Gastrocnemius medialis (tissue), 4 donors: ENCODE measurements at regions of chr19 and their contacts with region 1.

Region 1: DNA sequence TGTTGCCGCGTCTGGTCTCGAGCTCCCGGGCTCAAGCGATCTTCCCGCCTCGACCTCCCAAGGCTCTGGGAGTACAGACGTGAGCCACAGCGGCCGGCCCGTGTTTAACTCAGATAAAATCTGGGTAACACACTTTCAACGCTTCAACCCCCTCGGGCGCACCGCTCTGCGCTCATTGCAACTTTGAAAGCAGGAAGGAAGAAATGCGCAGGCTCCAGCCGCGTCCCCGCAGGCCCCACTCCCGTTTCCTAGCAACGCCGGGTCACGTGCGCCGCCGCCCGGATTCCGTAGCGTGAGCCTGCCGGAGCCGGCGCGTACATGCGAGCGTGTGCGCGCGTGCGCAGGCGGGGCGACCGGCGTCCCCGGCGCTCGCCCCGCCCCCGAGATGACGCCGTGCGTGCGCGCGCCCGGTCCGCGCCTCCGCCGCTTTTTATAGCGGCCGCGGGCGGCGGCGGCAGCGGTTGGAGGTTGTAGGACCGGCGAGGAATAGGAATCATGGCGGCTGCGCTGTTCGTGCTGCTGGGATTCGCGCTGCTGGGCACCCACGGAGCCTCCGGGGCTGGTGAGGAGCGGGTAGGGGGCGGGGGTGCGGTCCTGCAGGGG is at the start of gene BSG:
- DNase-seq: peak; percentile 97
- ATAC-seq: peak; percentile 49 to 58
- H3K4me3 ChIP-seq: peak within 1 kb of the TSS; percentile 85 to 100 (median 96)
- H3K27ac ChIP-seq: peak within 1 kb of the TSS; percentile 97 to 100 (median 99)
- H3K4me1 ChIP-seq: peaks cover 39 to 50% of the 10 kb centered on the region in 2 donors
- H3K27me3 ChIP-seq: peaks cover 4 to 8% (median 5%) of the 10 kb centered on the region in 3 donors
- CTCF ChIP-seq: peak in 1 of 5 experiments; percentile 26
- POLR2A ChIP-seq: peak; percentile 99
- total RNA-seq, gene BSG: 305 to 380 (median 364) TPM

Region 2: DNA sequence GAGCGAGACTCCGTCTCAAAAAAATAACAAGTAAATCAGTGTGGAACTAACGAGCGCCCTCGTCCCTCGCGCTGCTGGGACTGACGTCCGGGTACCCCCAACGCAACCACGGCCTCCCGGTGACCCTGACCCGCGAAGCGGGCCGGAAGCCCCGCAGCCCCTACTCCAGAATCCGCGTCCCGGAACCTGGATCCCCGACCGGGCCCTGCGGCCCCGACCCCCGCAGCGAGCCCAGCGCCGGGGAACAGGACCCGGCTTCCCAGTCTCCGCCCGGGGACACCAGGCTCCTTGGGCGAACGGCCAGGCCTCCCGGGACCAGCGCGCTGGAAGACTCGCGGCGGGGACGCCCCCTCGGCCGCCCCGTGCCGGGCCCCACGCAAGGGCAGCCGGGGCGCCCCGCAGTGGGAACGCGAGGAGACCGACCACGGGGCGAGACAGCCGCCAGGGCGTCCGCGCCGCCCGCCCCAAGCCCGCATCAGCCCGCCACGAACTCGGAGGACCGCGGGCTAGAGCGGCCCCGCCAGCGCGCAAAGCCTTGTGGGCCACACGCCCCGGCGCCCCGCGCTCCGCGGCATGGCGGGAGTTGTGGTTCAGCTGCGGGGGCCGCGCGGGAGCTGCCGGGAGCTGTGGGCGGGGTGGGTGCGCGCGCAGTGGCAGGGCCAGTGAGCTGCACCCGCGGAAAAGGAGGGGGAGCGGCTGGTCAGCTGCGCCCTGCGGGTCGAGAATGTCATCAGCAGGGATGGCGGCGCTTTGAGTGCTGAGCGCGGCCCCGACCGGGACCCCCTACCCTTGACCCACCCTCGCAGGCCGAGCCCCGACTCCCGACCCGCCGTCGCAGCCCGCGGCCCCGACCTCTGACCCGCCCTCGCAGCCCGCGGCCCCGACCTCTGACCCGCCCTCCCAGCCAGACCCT is 83.5 kb before region 1 on chr19:
- in situ Hi-C with region 1: no loop called
- intact Hi-C with region 1: loop called (anchors 5 kb)
- DNase-seq: peak; percentile 87 to 95
- ATAC-seq: peak; percentile 92
- H3K4me3 ChIP-seq: peak overlapping the region; percentile 76 to 93 (median 84)
- H3K27ac ChIP-seq: peak overlapping the region; percentile 79 to 94 (median 92)
- H3K4me1 ChIP-seq: peaks cover 6 to 7% of the 10 kb centered on the region in 2 donors
- H3K27me3 ChIP-seq: peaks cover 10 to 21% (median 14%) of the 10 kb centered on the region in 3 donors
- CTCF ChIP-seq: peak in 1 of 5 experiments; percentile 31
- POLR2A ChIP-seq: peak; percentile 69 to 83

Region 3: GRCh38 chr19:633068-633785 is 61.0 kb after region 1 on chr19 and contains the start of gene POLRMT:
- in situ Hi-C with region 1: no loop called
- intact Hi-C with region 1: loop called (anchors 1 kb)
- DNase-seq: peak; percentile 98 to 99
- ATAC-seq: peak; percentile 100
- H3K4me3 ChIP-seq: peak within 1 kb of the TSS; percentile 75 to 99 (median 88)
- H3K27ac ChIP-seq: peak within 1 kb of the TSS; percentile 81 to 91 (median 86)
- H3K4me1 ChIP-seq: peaks cover 10 to 25% of the 10 kb centered on the region in 2 donors
- H3K27me3 ChIP-seq: no peaks in the 10 kb centered on the region
- CTCF ChIP-seq: peak in 1 of 5 experiments; percentile 25
- POLR2A ChIP-seq: peak; percentile 62 to 80
- total RNA-seq, gene POLRMT: 43.9 to 83.4 (median 73.8) TPM

Region 4: DNA sequence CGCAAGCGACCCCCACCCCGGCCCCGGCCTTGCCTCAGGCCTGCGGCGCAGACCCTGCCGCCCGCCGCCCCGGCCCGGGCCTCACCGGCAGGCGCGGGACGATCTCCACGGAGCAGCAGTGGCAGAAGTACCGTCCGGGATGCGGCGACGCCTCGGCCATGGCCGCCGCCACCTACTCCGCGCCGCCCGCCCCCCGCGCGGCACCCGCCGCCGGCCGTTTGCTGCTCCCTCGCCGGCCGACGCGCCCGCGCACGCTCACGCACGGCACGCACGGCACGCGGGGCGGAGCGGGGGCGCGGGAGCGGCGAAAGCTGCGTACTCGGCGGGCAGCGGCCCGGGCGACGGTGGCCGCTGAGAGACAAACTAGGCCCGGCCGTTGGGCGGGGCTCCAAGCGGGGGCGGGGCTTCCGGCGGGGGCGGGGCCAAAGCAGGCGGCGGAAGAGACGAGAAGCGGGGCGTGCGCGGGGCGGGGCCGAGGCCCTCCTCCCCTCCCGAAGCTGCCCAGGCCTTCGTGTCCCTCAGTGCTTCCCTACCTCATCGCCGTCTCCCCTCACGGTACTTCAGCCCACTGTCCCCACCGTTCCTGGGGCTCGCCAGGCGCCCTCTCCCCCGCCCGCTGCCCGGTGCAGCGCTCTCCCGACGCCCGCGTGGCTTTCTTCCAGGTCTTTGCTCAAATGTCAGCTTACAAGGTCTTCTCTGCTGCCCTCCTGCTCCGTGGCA is 90.9 kb after region 1 on chr19 and contains the start of gene RNF126:
- in situ Hi-C with region 1: no loop called
- intact Hi-C with region 1: loop called (anchors 2 kb)
- DNase-seq: peak; percentile 83 to 92
- ATAC-seq: peak; percentile 83 to 89
- H3K4me3 ChIP-seq: peak within 1 kb of the TSS; percentile 88 to 97 (median 91)
- H3K27ac ChIP-seq: peak within 1 kb of the TSS; percentile 93 to 100 (median 96)
- H3K4me1 ChIP-seq: peaks cover 28 to 59% of the 10 kb centered on the region in 2 donors
- H3K27me3 ChIP-seq: no peaks in the 10 kb centered on the region
- CTCF ChIP-seq: peak in 1 of 5 experiments; percentile 14
- POLR2A ChIP-seq: peak; percentile 83 to 90
- total RNA-seq, gene RNF126: 72.3 to 148 (median 129) TPM

Region 5: GRCh38 chr19:1213391-1214286 is 641.4 kb after region 1 on chr19:
- in situ Hi-C with region 1: no loop called
- intact Hi-C with region 1: loop called (anchors 10 kb)
- DNase-seq: peak; percentile 59 to 93
- ATAC-seq: peak; percentile 38 to 46
- H3K4me3 ChIP-seq: peak overlapping the region; percentile 24 to 41 (median 36)
- H3K27ac ChIP-seq: peak overlapping the region; percentile 94 to 98 (median 96)
- H3K4me1 ChIP-seq: peaks cover 87 to 96% of the 10 kb centered on the region in 2 donors
- H3K27me3 ChIP-seq: no peaks in the 10 kb centered on the region
- CTCF ChIP-seq: no peak
- POLR2A ChIP-seq: peak; percentile 32 to 59